A549 (cell line): ENCODE measurements at regions of chr17 and their contacts with region 1.

Region 1: DNA sequence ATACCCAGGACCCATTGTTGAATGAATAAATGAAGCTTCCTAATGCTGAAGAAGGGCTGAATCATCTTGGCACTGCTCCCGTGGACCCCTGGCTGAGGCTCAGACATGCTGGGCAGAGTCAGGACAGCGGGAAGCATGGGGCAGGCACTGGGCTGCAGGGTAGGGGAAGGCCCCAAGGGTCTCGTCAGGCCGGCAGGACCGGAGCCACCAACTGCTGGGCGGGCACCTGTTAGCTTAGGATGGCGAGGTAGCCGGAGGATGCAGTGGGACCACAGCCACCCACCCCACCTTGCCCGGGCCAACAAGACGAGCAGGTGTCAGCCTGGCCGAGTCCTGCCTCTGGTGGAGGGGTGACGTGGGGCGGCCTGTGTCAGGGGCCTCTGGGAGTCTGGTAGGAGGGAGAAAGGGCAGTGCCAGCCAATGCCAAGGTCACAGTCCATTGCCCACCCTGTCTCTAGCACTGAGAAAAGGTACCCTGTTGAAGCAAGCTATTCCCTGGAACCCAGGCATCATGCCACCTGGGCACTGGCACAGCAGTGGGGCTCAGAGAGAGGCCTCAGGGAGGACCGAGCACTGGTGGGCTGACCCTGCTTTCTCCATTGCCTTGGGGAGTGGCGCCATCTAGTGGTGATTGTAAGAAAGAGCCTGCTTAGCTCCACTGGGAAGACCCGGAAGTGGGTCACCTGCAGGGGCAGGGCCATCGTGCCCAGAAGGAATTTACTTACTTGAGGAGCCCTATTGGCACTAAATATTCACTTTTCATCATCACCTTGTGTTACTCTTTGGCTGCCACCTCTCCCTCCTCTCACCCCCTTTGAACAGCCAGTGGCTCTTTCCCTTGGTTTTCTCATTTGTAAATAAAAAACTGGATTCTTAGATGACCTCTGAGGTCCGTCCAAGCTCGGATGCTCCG is 3.0 kb upstream of the DLX3 start:
- DNase-seq: peak; percentile 92 to 95
- ATAC-seq: peak; percentile 73 to 88
- H3K4me3 ChIP-seq: no peak overlapping the region
- H3K27ac ChIP-seq: peak overlapping the region; percentile 54 to 71
- H3K4me1 ChIP-seq: peaks cover 29% of the 10 kb centered on the region
- CTCF ChIP-seq: peak; percentile 99
- EP300 ChIP-seq: no peak
- POLR2A ChIP-seq: no peak
- RAD21 ChIP-seq: peak; percentile 99

Region 2: DNA sequence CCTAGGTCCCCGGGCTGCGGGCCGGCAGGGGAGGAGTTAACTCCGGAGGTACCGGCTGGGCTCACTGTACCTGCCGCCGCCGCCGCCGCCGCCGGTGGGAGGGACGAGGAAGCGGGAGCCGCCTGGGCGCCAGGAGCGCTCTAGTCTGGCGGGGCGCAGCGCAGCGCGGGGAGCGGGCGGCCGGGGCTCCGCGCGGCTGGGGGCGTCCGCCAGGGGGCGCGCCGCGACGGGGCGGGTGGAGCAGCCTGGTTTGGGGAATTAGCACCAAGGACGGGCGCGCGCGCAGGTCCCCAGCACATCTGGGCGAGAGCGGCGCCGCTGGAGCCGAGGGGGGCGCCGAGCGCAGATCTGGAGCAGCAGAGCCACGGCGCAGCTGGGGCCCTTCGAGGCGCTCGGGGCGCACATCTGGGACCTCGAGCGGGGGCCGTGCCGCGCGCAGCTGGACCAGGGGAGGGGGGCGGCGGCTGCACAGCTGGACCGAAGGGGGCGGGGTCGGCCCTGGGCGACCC is 422.4 kb before region 1 on chr17 and contains the start of gene NXPH3:
- CTCF ChIA-PET with region 1: interaction called, 95 read pairs
- POLR2A ChIA-PET with region 1: no interaction called
- DNase-seq: peak; percentile 64 to 79
- ATAC-seq: peak; percentile 50 to 78
- H3K4me3 ChIP-seq: peak within 1 kb of the TSS; percentile 53
- H3K27ac ChIP-seq: peak within 1 kb of the TSS; percentile 48 to 73; a peak in 5 of 6 replicates
- H3K4me1 ChIP-seq: peaks cover 4% of the 10 kb centered on the region; the same call in 1 of the 3 replicates
- CTCF ChIP-seq: peak; percentile 96
- EP300 ChIP-seq: no peak
- POLR2A ChIP-seq: no peak
- RAD21 ChIP-seq: peak; percentile 10 to 70; a peak in 3 of 5 replicates
- polyA plus RNA-seq, gene NXPH3: 0.07 and 0.12 TPM in 2 replicates

Region 3: DNA sequence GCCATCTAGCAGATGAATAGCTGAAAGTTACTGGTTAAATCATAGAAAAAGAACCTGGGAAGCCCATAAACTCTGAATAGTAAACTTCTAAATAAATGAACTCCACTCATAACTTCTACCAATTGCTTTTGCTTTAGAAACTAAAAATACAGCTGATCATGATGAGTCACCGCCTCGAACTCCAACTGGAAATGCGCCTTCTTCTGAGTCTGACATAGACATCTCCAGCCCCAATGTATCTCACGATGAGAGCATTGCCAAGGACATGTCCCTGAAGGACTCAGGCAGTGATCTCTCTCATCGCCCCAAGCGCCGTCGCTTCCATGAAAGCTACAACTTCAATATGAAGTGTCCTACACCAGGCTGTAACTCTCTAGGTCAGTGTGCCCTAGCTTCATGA is 199.9 kb before region 1 on chr17:
- CTCF ChIA-PET with region 1: interaction called, 14 read pairs
- POLR2A ChIA-PET with region 1: no interaction called
- DNase-seq: no peak
- ATAC-seq: no peak
- H3K4me3 ChIP-seq: no peak overlapping the region
- H3K27ac ChIP-seq: no peak overlapping the region
- H3K4me1 ChIP-seq: no peaks in the 10 kb centered on the region
- CTCF ChIP-seq: no peak
- EP300 ChIP-seq: no peak
- POLR2A ChIP-seq: no peak
- RAD21 ChIP-seq: no peak

Region 4: GRCh38 chr17:49887086-49888028 is 110.7 kb before region 1 on chr17:
- CTCF ChIA-PET with region 1: interaction called, 2,613 read pairs
- POLR2A ChIA-PET with region 1: no interaction called
- DNase-seq: no peak
- ATAC-seq: no peak
- H3K4me3 ChIP-seq: no peak overlapping the region
- H3K27ac ChIP-seq: no peak overlapping the region
- H3K4me1 ChIP-seq: no peaks in the 10 kb centered on the region
- CTCF ChIP-seq: no peak
- EP300 ChIP-seq: no peak
- POLR2A ChIP-seq: no peak
- RAD21 ChIP-seq: no peak

Region 5: GRCh38 chr17:50009282-50009681 is 11.2 kb after region 1 on chr17:
- CTCF ChIA-PET with region 1: interaction called, 56 read pairs
- POLR2A ChIA-PET with region 1: no interaction called
- DNase-seq: no peak
- ATAC-seq: no peak
- H3K4me3 ChIP-seq: no peak overlapping the region
- H3K27ac ChIP-seq: no peak overlapping the region
- H3K4me1 ChIP-seq: no peaks in the 10 kb centered on the region
- CTCF ChIP-seq: no peak
- EP300 ChIP-seq: no peak
- POLR2A ChIP-seq: no peak
- RAD21 ChIP-seq: no peak

Region 6: DNA sequence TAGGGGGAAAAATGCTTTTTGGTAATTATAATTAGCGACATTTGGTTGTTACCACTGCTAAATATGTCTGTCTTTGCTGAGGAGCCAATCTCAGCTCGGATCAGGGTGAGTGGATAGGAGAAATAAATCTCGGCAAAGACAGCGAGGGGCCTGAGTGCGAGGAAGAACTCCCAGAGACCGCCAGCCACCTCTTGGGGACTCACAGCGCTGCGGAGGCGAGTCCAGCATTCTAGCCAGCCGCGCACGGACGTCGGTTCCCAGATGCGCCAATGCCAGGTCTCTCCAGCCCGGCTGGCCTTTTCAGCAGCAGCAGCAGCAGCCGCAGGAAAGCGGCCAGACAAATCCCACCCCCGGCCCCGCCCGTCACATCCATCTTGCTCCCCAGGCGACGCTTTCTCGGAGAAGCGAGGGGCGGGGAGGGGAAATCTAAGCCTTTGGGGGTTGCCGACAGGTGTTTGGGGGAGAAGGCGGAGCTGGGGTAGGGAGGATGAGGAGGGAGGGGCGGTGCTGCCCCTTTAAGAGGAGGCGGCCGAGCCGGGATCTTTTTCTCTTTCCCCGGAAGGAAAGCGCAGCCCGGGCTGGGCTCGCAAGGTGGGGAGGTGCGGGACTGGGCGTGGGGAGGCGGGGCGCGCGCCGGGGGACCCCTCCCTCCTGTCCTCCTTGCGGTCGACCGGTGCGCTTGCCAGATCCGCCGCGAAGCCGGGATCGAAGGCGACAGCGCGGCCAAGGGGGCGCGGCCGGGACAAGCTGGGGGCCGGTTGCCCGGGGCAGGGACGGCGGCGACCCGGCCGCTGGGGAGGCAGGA is 57.6 kb after region 1 on chr17 and contains the start of gene ITGA3:
- CTCF ChIA-PET with region 1: interaction called, 20 read pairs
- POLR2A ChIA-PET with region 1: interaction called, 4 read pairs
- DNase-seq: peak; percentile 93 to 96
- ATAC-seq: peak; percentile 57 to 73
- H3K4me3 ChIP-seq: peak within 1 kb of the TSS; percentile 77
- H3K27ac ChIP-seq: peak within 1 kb of the TSS; percentile 92 to 97
- H3K4me1 ChIP-seq: peaks cover 74% of the 10 kb centered on the region
- CTCF ChIP-seq: no peak
- EP300 ChIP-seq: 0 out of 5 replicates have a peak, but pooled peaks of 1 of the 2 experiments have one; percentile 15
- POLR2A ChIP-seq: peak; percentile 95
- RAD21 ChIP-seq: peak; percentile 2 to 35; a peak in 1 of 5 replicates
- polyA plus RNA-seq, gene ITGA3: 141 and 181 TPM in 2 replicates

Region 7: DNA sequence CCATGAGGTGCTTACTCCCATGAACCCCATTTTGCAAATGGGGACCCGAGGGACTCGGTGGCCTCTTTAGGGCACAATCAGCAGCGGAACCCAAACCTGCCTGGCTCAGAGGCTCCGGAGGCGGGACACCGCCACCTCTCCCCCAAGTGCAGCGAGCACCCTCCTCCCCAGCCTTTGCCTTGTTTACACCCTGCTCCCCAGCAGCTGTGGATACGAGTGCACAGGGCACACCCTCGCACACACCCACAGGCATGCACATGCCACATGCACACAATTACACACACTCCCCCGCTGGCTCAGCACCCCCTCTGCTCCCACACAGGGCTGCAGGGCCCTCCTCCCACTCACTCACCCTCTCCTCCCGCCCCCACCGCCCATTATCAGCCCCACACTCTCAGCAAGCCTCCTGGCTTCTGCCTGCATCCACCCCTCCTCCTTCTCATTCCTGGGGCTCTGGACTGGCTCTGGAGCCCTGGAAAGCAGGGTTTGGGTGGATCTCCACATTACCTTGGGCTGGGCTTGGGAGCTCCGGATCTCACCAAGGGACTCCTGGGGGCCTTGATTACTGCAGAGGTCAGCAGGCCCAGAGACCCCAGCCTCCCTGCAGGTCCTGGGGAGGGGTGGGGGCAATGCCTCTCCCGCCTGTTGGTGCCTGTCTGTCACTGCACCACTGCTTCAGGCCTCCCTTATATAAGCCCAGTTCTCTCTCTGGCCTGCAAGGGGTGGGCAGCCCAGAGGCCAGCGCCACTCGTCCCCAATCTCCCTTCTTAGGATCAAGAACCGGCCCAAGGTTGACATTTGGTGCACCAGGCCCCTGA is 103.5 kb after region 1 on chr17:
- CTCF ChIA-PET with region 1: interaction called, 13 read pairs
- POLR2A ChIA-PET with region 1: no interaction called
- DNase-seq: no peak
- ATAC-seq: peak; percentile 27 to 63
- H3K4me3 ChIP-seq: no peak overlapping the region
- H3K27ac ChIP-seq: peak overlapping the region in 1 of 2 experiments; percentile 68; a peak in 3 of 6 replicates
- H3K4me1 ChIP-seq: peaks cover 29% of the 10 kb centered on the region
- CTCF ChIP-seq: no peak
- EP300 ChIP-seq: no peak
- POLR2A ChIP-seq: no peak
- RAD21 ChIP-seq: no peak

Region 8: GRCh38 chr17:50289991-50290702 is 292.1 kb after region 1 on chr17:
- CTCF ChIA-PET with region 1: no interaction called
- POLR2A ChIA-PET with region 1: no interaction called
- DNase-seq: peak; percentile 87
- ATAC-seq: peak; percentile 95
- H3K4me3 ChIP-seq: peak overlapping the region; percentile 23; the same call in 2 of the 3 replicates
- H3K27ac ChIP-seq: peak overlapping the region; percentile 85 to 91
- H3K4me1 ChIP-seq: peaks cover 28% of the 10 kb centered on the region
- CTCF ChIP-seq: no peak
- EP300 ChIP-seq: no peak
- POLR2A ChIP-seq: no peak
- RAD21 ChIP-seq: no peak